ENCODE measurements at regions of chr1 and their contacts with region 1.

Region 1: GRCh38 chr1:209576798-209577197 is 6.7 kb upstream of the CAMK1G start:
- DNase-seq: peak; percentile 83 to 88
- H3K4me3 ChIP-seq: no peak overlapping the region
- H3K27ac ChIP-seq: no peak overlapping the region
- H3K4me1 ChIP-seq: peaks cover 0 to 5% (median 0%) of the 10 kb centered on the region in 4 donors
- H3K27me3 ChIP-seq: peaks cover 0 to 52% (median 0%) of the 10 kb centered on the region in 3 donors
- CTCF ChIP-seq: peak in 5 of 7 experiments; percentile 77 to 91 (median 88)
- EP300 ChIP-seq: no peak
- POLR2A ChIP-seq: no peak

Region 2: DNA sequence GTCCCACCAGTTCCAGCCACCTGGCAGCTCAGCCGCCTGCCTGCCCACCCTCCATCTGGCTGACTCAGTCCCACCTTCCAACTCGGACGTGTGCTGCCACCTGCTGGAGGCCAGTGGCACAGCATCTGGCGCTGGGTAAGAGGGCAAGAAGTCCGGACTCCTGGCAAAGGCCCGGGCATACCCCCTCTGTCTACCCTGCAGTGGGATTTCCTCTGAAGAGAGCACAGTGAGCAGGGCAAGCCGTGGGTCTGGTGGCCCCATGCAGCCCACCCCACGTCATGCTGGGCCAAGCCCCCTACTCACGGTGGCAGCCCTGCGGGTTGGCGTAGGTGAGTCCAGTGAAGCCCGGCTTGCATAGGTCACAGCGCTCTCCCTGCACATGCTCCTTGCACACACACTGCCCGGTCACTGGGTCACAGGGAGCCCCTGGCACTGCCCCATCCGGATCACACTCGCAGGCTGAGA is 51.0 kb after region 1 on chr1:
- intact Hi-C with region 1: loop called (anchors 10 kb)
- DNase-seq: peak; percentile 79 to 90
- H3K4me3 ChIP-seq: no peak overlapping the region
- H3K27ac ChIP-seq: no peak overlapping the region
- H3K4me1 ChIP-seq: peaks cover 0 to 30% (median 13%) of the 10 kb centered on the region in 4 donors
- H3K27me3 ChIP-seq: no peaks in the 10 kb centered on the region
- CTCF ChIP-seq: peak in 5 of 7 experiments; percentile 63 to 96 (median 89)
- EP300 ChIP-seq: no peak
- POLR2A ChIP-seq: no peak

Region 3: GRCh38 chr1:209692745-209693504 is 116.1 kb after region 1 on chr1:
- intact Hi-C with region 1: loop called (anchors 5 kb)
- DNase-seq: peak; percentile 73 to 92
- H3K4me3 ChIP-seq: no peak overlapping the region
- H3K27ac ChIP-seq: peak overlapping the region in 1 of 5 donors; percentile 35
- H3K4me1 ChIP-seq: peaks cover 0 to 36% (median 3%) of the 10 kb centered on the region in 4 donors
- H3K27me3 ChIP-seq: no peaks in the 10 kb centered on the region
- CTCF ChIP-seq: peak in 5 of 7 experiments; percentile 47 to 87 (median 80)
- EP300 ChIP-seq: no peak
- POLR2A ChIP-seq: no peak

Region 4: GRCh38 chr1:209743145-209743482 is 166.3 kb after region 1 on chr1:
- intact Hi-C with region 1: loop called (anchors 5 kb)
- DNase-seq: peak; percentile 35 to 49
- H3K4me3 ChIP-seq: no peak overlapping the region
- H3K27ac ChIP-seq: peak overlapping the region in 3 of 5 donors; percentile 19 to 40 (median 20)
- H3K4me1 ChIP-seq: peaks cover 0 to 27% (median 13%) of the 10 kb centered on the region in 4 donors
- H3K27me3 ChIP-seq: no peaks in the 10 kb centered on the region
- CTCF ChIP-seq: no peak
- EP300 ChIP-seq: no peak
- POLR2A ChIP-seq: no peak